Activated CD4-positive, alpha-beta T cell treated with anti-CD3 and anti-CD28 coated beads for 36 hours (primary cell): ENCODE measurements at regions of chr1 and their contacts with region 1.

Region 1: DNA sequence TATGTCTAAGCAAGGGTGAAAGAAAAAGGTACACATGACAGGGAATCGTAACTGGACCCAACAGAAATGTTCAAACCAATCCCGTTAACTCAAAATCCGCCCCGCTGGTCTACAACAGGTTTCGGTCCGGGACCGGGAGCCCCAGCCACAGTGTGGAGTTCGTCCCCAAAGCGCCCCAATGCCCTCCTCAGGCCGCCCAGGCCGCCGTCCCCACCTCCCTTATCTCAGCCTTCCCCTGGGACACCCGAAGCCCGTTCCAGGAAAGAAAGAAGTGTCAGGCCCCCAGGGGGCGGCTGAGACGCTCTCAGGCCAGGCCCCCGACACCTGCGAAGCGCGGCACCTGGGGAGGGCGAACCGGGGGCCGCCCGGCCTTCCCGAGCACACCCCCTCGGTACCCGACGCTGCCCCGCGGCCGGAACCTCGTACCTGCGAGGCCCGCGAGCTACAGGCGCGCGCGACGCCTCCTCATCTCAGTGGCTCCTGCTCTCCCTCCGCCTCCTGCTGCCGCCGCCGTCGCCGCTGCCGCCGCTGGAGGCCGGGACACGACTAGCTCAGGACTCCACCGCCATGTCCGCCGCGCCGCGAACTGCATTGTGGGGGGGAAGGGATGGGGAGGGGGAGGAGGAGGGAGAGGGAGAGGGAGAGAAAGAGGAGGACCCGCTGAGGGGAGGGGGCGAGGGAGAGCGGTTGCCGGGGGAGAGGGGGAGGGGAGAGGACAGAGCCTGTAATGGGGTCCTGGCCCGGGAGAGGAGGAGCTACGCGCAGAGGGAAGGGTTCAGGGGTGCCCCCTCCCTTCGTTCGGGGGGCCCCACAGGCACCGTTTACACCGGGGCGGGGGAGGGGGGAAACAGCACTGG is at the start of gene TUT4:
- DNase-seq: peak; percentile 90
- ATAC-seq: peak; percentile 57
- H3K4me3 Mint-ChIP-seq: no peak within 1 kb of the TSS
- H3K27ac Mint-ChIP-seq: peak within 1 kb of the TSS; percentile 84
- H3K4me1 Mint-ChIP-seq: peaks cover 34% of the 10 kb centered on the region
- H3K27me3 Mint-ChIP-seq: no peaks in the 10 kb centered on the region
- total RNA-seq, gene TUT4: 61.6 to 71.7 TPM

Region 2: DNA sequence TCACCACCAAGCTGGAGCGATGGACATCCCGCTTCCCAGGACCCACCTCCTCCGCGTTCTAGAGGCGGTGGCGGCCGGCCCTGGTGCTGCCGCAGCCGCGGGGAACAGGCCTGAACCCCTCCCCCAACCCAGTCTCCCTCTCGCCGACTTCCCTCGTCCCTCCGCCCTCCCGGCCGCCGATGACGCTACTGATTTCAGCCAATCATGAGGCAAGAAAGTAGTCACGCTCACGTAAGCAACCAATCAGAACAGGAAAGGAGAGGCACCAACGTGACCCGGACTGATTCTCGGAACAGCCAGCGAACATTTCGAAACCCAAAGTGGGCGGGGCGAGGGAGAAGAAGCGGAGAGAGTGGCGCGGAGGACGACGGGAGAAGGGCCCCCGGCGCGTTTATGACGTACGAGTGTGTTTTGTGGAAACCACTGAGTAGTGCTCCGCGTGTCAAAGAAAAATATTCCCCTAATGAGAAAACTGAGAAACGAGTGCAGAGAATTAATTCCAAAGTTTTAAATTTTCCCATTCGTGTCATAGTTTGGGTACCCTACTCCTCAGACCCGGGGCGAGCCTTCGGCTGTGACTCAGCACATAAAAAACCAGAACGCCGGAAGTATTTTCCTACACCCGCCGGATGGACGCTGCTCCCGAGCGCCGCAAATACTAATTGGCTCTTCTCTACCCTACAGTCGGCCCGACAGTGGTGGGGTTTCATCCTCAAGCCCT is 674.0 kb before region 1 on chr1 and contains the start of gene NRDC:
- CTCF ChIA-PET with region 1: no interaction called
- POLR2A ChIA-PET with region 1: no interaction called
- intact Hi-C with region 1: loop called (anchors 1 to 2 kb)
- DNase-seq: peak; percentile 100
- ATAC-seq: peak; percentile 95
- H3K4me3 Mint-ChIP-seq: no peak within 1 kb of the TSS
- H3K27ac Mint-ChIP-seq: no peak within 1 kb of the TSS
- H3K4me1 Mint-ChIP-seq: peaks cover 27% of the 10 kb centered on the region
- H3K27me3 Mint-ChIP-seq: peaks cover 12% of the 10 kb centered on the region
- total RNA-seq, gene NRDC: 149 to 186 TPM

Region 3: DNA sequence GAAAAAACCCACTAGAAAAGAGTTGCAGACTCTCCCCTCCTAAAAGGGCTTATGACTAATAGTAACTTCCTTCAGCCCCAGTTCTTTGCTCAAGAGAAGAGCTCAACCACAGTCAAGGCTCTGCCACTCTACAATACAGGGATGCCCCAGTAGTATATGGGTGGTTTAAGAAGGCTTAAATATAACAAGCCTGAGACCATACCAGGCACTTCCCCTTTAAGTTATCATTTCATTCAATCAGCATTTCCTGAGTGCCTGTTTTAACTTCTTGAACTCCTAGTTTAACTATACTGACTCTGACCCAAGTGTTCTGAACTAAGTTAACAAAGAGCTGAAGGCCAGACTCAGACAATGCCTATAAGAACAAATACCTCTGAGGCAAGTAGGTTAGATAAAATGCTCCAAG is 128.5 kb before region 1 on chr1:
- CTCF ChIA-PET with region 1: no interaction called
- POLR2A ChIA-PET with region 1: interaction called, 3 read pairs
- intact Hi-C with region 1: loop called in 1 of 2 experiments (anchors 2 kb)
- DNase-seq: peak; percentile 22
- ATAC-seq: peak; percentile 89
- H3K4me3 Mint-ChIP-seq: peak overlapping the region; percentile 47
- H3K27ac Mint-ChIP-seq: peak overlapping the region; percentile 73
- H3K4me1 Mint-ChIP-seq: peaks cover 46% of the 10 kb centered on the region
- H3K27me3 Mint-ChIP-seq: no peaks in the 10 kb centered on the region

Region 4: GRCh38 chr1:52636721-52637695 is 84.3 kb after region 1 on chr1:
- CTCF ChIA-PET with region 1: interaction called, 5 read pairs
- POLR2A ChIA-PET with region 1: interaction called, 4 read pairs
- intact Hi-C with region 1: loop called (anchors 1 to 2 kb)
- DNase-seq: peak; percentile 84
- ATAC-seq: peak; percentile 62
- H3K4me3 Mint-ChIP-seq: peak overlapping the region; percentile 68
- H3K27ac Mint-ChIP-seq: peak overlapping the region; percentile 97
- H3K4me1 Mint-ChIP-seq: peaks cover 74% of the 10 kb centered on the region
- H3K27me3 Mint-ChIP-seq: no peaks in the 10 kb centered on the region

Region 5: GRCh38 chr1:52697795-52698674 is 145.3 kb after region 1 on chr1 and contains the start of gene COA7:
- CTCF ChIA-PET with region 1: interaction called, 3 read pairs
- POLR2A ChIA-PET with region 1: no interaction called
- intact Hi-C with region 1: loop called in 1 of 2 experiments (anchors 1 kb)
- DNase-seq: peak; percentile 83
- ATAC-seq: peak; percentile 50
- H3K4me3 Mint-ChIP-seq: peak within 1 kb of the TSS; percentile 93
- H3K27ac Mint-ChIP-seq: peak within 1 kb of the TSS; percentile 89
- H3K4me1 Mint-ChIP-seq: peaks cover 23% of the 10 kb centered on the region
- H3K27me3 Mint-ChIP-seq: no peaks in the 10 kb centered on the region
- total RNA-seq, gene COA7: 11.0 to 17.2 TPM

Region 6: DNA sequence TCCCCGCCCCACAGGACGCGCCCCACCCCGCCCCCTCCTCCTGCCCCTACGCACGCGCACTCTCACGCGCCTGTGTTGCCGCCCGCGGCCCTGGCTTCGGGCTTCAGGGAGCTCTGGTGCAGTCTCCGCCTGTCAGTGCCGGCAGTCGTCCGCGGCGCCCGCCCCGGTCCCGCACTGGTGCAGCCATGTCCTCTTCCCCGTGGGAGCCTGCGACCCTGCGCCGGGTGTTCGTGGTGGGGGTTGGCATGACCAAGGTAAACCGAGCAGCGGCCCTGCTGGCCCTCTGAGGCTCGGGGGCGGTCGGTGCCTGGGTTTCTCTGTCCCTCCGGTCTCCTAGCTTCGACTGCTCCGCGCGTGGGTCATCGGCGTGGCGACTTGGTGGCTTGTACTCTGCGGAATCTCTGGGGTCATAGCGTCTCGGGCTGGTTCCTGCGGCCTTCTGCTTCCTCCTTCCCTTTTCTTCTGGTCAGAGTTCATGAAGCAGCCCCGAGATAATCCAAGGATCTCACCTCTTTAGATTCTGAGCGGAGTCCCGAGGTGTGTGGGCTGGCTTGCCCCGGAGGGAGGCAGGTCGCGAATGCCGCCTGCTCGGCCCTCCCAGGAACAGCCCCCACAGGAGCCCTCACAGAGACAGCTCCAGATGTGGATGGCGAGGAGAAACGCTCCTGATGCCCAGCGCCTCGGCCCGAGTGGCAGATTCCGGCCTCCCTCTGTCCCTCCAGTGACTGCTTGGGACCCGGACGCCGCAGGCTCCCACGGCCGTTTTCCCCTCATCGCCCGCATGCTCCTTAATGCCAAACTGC is 374.7 kb after region 1 on chr1 and contains the start of gene SCP2:
- CTCF ChIA-PET with region 1: no interaction called
- POLR2A ChIA-PET with region 1: no interaction called
- intact Hi-C with region 1: loop called in 1 of 2 experiments (anchors 10 kb)
- DNase-seq: peak; percentile 90
- ATAC-seq: peak; percentile 94
- H3K4me3 Mint-ChIP-seq: peak within 1 kb of the TSS; percentile 78
- H3K27ac Mint-ChIP-seq: peak within 1 kb of the TSS; percentile 68
- H3K4me1 Mint-ChIP-seq: peaks cover 14% of the 10 kb centered on the region
- H3K27me3 Mint-ChIP-seq: no peaks in the 10 kb centered on the region
- total RNA-seq, gene SCP2: 46.6 to 67.1 TPM

Region 7: GRCh38 chr1:53393325-53393792 is 840.6 kb after region 1 on chr1:
- CTCF ChIA-PET with region 1: no interaction called
- POLR2A ChIA-PET with region 1: no interaction called
- intact Hi-C with region 1: no loop called
- DNase-seq: peak; percentile 83
- ATAC-seq: peak; percentile 94
- H3K4me3 Mint-ChIP-seq: no peak overlapping the region
- H3K27ac Mint-ChIP-seq: no peak overlapping the region
- H3K4me1 Mint-ChIP-seq: no peaks in the 10 kb centered on the region
- H3K27me3 Mint-ChIP-seq: no peaks in the 10 kb centered on the region